RWPE1 (cell line): ENCODE measurements at regions of chr20 and their contacts with region 1.

Region 1: DNA sequence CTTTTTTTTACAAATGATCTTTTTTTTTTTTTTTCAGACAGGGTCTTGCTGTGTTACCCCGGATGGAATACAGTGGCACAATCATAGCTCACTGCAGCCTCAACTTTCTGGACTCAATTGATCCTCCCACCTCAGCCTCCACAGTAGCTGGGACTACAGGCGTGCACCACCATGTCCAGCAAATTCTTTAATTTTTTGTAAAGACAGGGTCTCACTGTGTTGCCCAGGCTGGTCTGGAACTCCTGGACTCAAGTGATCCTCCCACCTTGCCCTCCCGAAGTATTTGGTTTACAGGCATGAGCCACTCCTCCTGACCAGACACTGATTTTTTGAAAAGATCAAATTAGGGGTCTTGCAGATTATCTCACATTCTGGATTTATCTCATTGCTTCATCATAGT is 11.0 kb upstream of the MYBL2 start:
- DNase-seq: no peak
- H3K27ac ChIP-seq: no peak overlapping the region
- CTCF ChIP-seq: no peak

Region 2: DNA sequence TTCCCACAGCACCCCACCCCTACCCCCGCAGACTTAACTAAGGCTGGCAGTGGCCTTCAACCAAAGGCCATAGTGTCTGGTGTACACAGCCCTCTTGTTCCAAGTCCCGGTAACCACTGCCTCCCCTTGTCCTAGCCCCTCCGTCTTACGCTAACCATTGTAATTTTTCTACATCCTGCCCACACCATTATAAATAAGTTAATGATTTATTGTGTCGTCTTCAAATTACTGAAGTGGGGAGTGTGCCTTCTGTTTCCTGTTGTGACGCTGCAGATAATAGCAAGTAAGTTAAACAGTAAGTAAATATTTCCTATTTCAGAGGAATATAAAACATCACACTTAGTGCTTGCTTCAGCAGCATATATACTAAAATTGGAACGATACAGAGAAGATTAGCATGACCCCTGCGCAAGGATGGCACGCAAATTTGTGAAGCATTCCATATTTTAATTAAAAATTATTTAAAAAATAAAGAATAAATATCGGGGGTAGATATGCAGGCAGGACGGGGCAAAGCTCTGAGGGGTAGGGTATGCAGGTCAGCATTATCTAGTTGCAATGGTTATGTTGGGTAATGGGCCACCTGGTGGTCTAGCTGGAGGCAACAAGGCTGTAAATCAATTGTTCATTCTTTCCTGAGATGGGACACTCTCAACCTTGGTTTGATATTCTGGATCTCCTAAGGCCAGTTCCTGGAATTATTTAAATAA is 183.1 kb before region 1 on chr20:
- CTCF ChIA-PET with region 1: interaction called, 4 read pairs
- POLR2A ChIA-PET with region 1: interaction called, 12 read pairs
- DNase-seq: no peak
- H3K27ac ChIP-seq: no peak overlapping the region
- CTCF ChIP-seq: no peak

Region 3: GRCh38 chr20:43558412-43559146 is 97.4 kb before region 1 on chr20 and contains the start of gene SGK2:
- CTCF ChIA-PET with region 1: no interaction called
- POLR2A ChIA-PET with region 1: no interaction called
- DNase-seq: no peak
- H3K27ac ChIP-seq: no peak within 1 kb of the TSS
- CTCF ChIP-seq: no peak